IMR-90 (cell line): ENCODE measurements at regions of chr21 and their contacts with region 1.

Region 1: GRCh38 chr21:18477043-18477442 is 73.5 kb upstream of the TMPRSS15 start:
- DNase-seq: no peak
- ATAC-seq: no peak
- H3K4me3 ChIP-seq: no peak overlapping the region
- H3K27ac ChIP-seq: no peak overlapping the region
- H3K4me1 ChIP-seq: no peaks in the 10 kb centered on the region
- H3K27me3 ChIP-seq: no peaks in the 10 kb centered on the region
- CTCF ChIP-seq: no peak
- POLR2A ChIP-seq: no peak
- RAD21 ChIP-seq: no peak

Region 2: DNA sequence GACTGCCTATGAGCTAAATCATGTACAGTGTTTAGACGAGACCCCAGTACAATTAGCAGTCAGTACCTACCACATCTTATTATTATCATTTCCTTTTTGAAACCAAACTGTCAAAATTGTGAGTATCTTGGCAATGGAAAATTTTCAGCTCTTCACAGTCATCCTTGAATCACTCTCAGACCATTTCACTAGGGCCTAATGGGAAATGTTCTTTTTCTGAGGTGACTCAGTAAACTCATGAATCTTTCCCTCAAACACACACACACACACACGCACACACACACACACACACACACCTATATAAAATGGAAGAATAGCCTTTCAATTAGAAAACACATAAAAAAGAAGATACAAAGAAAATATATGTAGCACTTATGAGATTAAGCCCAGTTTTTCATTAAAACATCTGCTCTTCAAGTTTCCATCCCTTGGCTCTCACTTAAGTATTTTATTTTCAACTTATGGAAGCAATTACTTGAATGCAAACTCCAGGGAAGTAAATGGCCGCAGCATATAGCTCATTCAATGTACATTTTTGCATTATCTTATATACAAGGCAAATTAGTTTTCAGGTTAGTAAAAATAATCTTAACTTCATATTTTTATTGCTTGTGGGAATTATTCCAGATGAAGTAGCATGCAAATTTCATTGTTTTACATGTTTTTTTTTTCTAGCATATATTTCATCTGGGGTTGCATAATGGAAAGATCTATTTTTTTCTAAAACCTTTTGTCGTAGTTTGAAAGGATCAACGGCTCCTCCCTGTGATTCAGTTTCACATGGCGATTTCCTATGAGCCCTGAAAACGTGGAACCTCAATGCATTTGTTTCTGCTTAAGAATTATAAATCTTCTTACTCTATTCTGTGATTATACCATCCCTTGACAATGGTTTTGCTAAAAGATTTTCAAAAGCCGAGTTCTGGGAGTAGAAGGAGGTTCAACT is 27.2 kb before region 1 on chr21:
- CTCF ChIA-PET with region 1: no interaction called
- POLR2A ChIA-PET with region 1: no interaction called
- dilution Hi-C with region 1: no loop called
- in situ Hi-C with region 1: no loop called
- intact Hi-C with region 1: no loop called
- DNase-seq: no peak
- ATAC-seq: no peak
- H3K4me3 ChIP-seq: no peak overlapping the region
- H3K27ac ChIP-seq: no peak overlapping the region
- H3K4me1 ChIP-seq: no peaks in the 10 kb centered on the region
- H3K27me3 ChIP-seq: no peaks in the 10 kb centered on the region
- CTCF ChIP-seq: no peak
- POLR2A ChIP-seq: no peak
- RAD21 ChIP-seq: no peak

Region 3: DNA sequence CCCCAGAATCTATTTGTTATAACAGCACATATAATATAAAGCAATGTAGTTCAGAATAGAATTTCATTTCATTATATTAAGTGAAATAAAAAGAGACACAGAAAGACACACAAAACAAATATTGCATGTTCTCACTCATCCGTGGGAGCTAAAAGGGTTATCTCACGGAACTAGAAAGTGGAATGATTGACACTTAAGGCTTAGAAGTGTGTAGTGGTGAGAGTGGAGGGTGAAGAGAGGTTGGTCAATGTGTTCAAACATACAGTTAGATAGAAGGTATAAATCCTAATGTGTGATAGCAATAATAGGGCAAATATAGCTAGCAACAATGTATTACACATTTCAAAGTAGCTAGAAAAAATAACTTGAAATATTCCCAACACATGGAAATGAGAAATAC is 928.3 kb after region 1 on chr21:
- CTCF ChIA-PET with region 1: no interaction called
- POLR2A ChIA-PET with region 1: no interaction called
- dilution Hi-C with region 1: no loop called
- in situ Hi-C with region 1: no loop called
- intact Hi-C with region 1: loop called (anchors 5 kb)
- DNase-seq: no peak
- ATAC-seq: no peak
- H3K4me3 ChIP-seq: no peak overlapping the region
- H3K27ac ChIP-seq: no peak overlapping the region
- H3K4me1 ChIP-seq: no peaks in the 10 kb centered on the region
- H3K27me3 ChIP-seq: no peaks in the 10 kb centered on the region
- CTCF ChIP-seq: no peak
- POLR2A ChIP-seq: no peak
- RAD21 ChIP-seq: no peak